ENCODE measurements at regions of chr2 and their contacts with region 1.

Region 1: GRCh38 chr2:26606847-26607190 is 34.3 kb downstream of the CIB4 start:
- DNase-seq: no peak
- H3K4me3 ChIP-seq: no peak overlapping the region
- H3K27ac ChIP-seq: no peak overlapping the region
- H3K4me1 ChIP-seq: no peaks in the 10 kb centered on the region
- H3K27me3 ChIP-seq: no peaks in the 10 kb centered on the region
- CTCF ChIP-seq: no peak

Region 2: DNA sequence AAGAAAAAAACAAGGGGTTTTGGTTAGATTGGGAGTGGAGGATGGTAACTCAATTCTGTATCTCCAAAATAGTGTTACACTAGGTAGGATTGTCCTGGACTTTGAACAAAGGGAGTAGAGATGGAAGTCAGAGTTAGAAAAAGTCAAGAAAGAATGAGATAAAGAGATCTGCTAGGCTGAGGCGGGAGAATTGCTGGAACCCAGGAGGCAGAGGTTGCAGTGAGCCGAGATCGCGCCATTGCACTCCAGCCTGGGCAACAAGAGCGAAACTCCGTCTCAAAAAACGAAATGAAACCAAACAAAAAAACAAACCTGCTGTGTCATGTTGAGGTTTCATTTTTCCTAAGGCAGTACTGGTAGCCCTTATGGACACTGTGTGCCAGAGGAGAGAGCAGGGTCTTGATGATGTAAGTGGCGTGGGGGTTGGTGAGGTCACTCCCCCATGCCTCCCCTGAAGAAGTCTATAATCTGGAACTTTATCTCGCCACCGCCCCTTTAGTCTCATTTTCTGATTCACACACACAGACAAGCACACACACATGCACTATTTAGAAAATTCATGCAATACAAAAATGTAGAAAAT is 194.6 kb before region 1 on chr2:
- intact Hi-C with region 1: no loop called
- DNase-seq: no peak
- H3K4me3 ChIP-seq: no peak overlapping the region
- H3K27ac ChIP-seq: no peak overlapping the region
- H3K4me1 ChIP-seq: no peaks in the 10 kb centered on the region
- H3K27me3 ChIP-seq: no peaks in the 10 kb centered on the region
- CTCF ChIP-seq: no peak

Region 3: GRCh38 chr2:26745609-26746327 is 138.9 kb after region 1 on chr2:
- intact Hi-C with region 1: loop called (anchors 2 kb)
- DNase-seq: peak; percentile 86
- H3K4me3 ChIP-seq: no peak overlapping the region
- H3K27ac ChIP-seq: no peak overlapping the region
- H3K4me1 ChIP-seq: no peaks in the 10 kb centered on the region
- H3K27me3 ChIP-seq: no peaks in the 10 kb centered on the region
- CTCF ChIP-seq: peak; percentile 87

Region 4: GRCh38 chr2:26942543-26943295 is 335.9 kb after region 1 on chr2:
- intact Hi-C with region 1: no loop called
- DNase-seq: peak; percentile 59
- H3K4me3 ChIP-seq: no peak overlapping the region
- H3K27ac ChIP-seq: no peak overlapping the region
- H3K4me1 ChIP-seq: no peaks in the 10 kb centered on the region
- H3K27me3 ChIP-seq: peaks cover 7% of the 10 kb centered on the region
- CTCF ChIP-seq: peak; percentile 82

Measured in colonic mucosa (tissue), 4 donors.